Naive thymus-derived CD4-positive, alpha-beta T cell (primary cell): ENCODE measurements at regions of chr5 and their contacts with region 1.

Region 1: GRCh38 chr5:81020478-81021174 is 60.5 kb downstream of the RASGRF2 start:
- DNase-seq: no peak
- ATAC-seq: no peak
- H3K4me3 ChIP-seq: no peak overlapping the region
- H3K4me3 Mint-ChIP-seq: peak overlapping the region in 7 of 10 donors; percentile 1 to 51 (median 15)
- H3K27ac ChIP-seq: no peak overlapping the region
- H3K27ac Mint-ChIP-seq: peak overlapping the region in 5 of 9 donors; percentile 49 to 93 (median 70)
- H3K4me1 ChIP-seq: peaks cover 12 to 62% of the 10 kb centered on the region in 2 donors
- H3K4me1 Mint-ChIP-seq: peaks cover 53 to 97% (median 91%) of the 10 kb centered on the region in 7 donors
- H3K27me3 ChIP-seq: no peaks in the 10 kb centered on the region
- H3K27me3 Mint-ChIP-seq: no peaks in the 10 kb centered on the region

Region 2: GRCh38 chr5:81068063-81068462 is 47.4 kb after region 1 on chr5:
- CTCF ChIA-PET with region 1: no interaction called
- POLR2A ChIA-PET with region 1: no interaction called
- intact Hi-C with region 1: loop called in 1 of 2 experiments (anchors 5 kb)
- DNase-seq: no peak
- ATAC-seq: no peak
- H3K4me3 ChIP-seq: no peak overlapping the region
- H3K4me3 Mint-ChIP-seq: no peak overlapping the region
- H3K27ac ChIP-seq: no peak overlapping the region
- H3K27ac Mint-ChIP-seq: peak overlapping the region in 2 of 9 donors; percentile 63 to 70
- H3K4me1 ChIP-seq: no peaks in the 10 kb centered on the region
- H3K4me1 Mint-ChIP-seq: peaks cover 0 to 34% (median 29%) of the 10 kb centered on the region in 7 donors
- H3K27me3 ChIP-seq: no peaks in the 10 kb centered on the region
- H3K27me3 Mint-ChIP-seq: no peaks in the 10 kb centered on the region